Left ventricle myocardium inferior (tissue), 1 donor: ENCODE measurements at regions of chr10 and their contacts with region 1.

Region 1: DNA sequence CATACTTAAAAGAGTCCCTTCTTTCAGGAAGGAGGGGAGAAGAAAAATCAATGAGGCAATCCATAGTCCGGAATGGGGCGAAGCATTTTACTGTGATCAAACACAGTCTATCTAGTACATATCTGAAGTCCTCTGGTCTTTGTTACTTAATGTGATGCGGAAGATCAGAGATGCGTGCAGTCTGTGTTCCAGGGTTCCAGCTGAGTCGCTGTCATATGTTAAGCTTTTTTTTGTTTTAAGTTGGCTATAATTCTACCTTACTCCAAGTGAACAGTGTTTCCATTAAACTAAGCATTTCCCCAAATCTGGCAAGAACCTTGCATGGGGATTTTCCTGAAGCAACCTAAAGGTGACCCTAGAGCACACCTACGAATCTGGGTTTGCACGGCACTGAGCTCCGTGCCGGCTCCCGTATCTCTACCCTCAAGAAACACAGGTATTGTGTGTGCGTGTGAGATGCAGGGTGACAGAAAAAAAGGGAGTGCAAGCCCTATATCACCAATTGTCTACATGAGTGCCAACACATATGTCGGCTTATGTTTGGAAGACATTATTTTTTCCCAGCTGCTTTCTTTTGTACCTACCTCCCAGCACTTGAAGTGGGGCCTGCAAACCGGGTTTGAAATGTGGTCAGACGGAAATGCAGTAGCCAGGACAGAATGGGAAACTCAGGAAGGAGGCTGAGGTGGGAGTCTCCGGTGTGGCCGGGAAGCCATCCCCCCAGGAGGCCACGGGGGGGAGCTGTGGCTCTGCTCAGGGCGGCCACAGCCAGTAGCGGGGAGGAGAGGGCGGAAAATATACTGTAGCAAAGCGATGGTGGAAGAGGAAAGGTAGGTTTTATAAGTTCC is 435.8 kb upstream of the MGMT start:
- DNase-seq: peak; percentile 57
- H3K4me3 ChIP-seq: no peak overlapping the region
- H3K27ac ChIP-seq: no peak overlapping the region
- H3K4me1 ChIP-seq: peaks cover 16% of the 10 kb centered on the region
- H3K27me3 ChIP-seq: peaks cover 85% of the 10 kb centered on the region
- CTCF ChIP-seq: peak; percentile 98

Region 2: DNA sequence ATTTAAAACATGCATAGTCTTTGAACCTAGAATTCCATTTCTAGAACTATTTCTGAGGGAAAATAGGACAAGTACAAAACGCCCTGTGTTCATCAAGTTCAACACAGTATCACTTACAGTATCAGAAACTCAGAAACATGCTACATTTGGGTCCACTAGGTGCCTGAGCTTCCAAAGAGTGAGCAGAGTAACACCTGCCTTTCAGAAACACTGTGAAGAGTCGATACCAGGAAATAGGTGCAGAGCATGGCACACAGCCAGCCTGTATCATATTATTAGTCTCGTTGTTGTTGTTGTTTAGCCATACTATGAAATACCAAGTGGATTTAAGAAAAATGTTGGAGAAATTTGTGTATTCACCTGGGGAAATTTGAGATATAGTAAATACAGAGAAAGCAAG is 43.7 kb after region 1 on chr10:
- intact Hi-C with region 1: no loop called
- DNase-seq: no peak
- H3K4me3 ChIP-seq: no peak overlapping the region
- H3K27ac ChIP-seq: no peak overlapping the region
- H3K4me1 ChIP-seq: peaks cover 10% of the 10 kb centered on the region
- H3K27me3 ChIP-seq: no peaks in the 10 kb centered on the region
- CTCF ChIP-seq: no peak

Region 3: DNA sequence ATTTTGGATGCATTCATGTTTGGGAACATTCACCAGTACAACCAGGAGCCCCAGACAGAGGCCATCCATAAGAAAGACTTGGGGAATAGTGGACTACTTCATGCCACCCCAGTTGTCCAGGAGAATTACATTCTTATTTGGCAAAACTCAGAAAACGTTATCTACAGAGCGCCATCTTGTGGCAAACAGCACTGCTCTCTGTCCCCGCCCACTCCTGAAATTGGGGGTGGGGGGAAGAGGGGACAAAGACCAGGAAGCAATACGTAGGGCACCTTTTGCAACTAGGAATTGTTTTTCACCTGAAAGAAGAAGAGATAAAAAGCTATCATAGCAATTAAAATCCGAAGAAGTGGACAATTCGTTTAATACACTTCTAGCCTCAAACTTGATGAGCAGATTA is 301.3 kb after region 1 on chr10:
- intact Hi-C with region 1: loop called (anchors 10 kb)
- DNase-seq: no peak
- H3K4me3 ChIP-seq: no peak overlapping the region
- H3K27ac ChIP-seq: no peak overlapping the region
- H3K4me1 ChIP-seq: no peaks in the 10 kb centered on the region
- H3K27me3 ChIP-seq: peaks cover 3% of the 10 kb centered on the region
- CTCF ChIP-seq: peak; percentile 62